ENCODE measurements at regions of chr5 and their contacts with region 1.

Region 1: DNA sequence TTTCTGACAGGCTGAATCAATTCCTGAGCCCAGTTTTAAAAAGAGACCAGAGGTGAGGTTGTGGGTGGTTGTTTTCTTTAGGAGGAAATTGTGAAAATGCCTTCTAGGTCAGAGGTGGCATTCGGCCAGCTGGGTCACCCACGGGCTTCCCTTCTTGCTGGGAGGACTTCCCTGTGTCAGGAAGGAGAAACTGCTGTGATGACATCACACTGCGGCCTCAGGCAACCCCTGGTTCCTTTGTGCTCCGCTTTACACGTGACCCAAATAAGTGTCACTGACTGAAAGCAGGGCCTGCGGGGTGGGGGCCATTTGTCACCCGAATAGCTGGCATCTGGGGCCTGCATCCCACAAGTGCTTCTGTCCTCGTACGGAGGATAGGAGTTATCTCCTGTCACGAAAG is 39.7 kb downstream of the FABP6 start:
- H3K4me3 Mint-ChIP-seq: no peak overlapping the region
- H3K27ac Mint-ChIP-seq: no peak overlapping the region
- H3K4me1 Mint-ChIP-seq: peaks cover 21% of the 10 kb centered on the region
- H3K27me3 Mint-ChIP-seq: peaks cover 41% of the 10 kb centered on the region

Region 2: GRCh38 chr5:160333721-160334120 is 64.7 kb after region 1 on chr5:
- intact Hi-C with region 1: loop called (anchors 5 kb)
- H3K4me3 Mint-ChIP-seq: peak overlapping the region; percentile 28
- H3K27ac Mint-ChIP-seq: no peak overlapping the region
- H3K4me1 Mint-ChIP-seq: peaks cover 34% of the 10 kb centered on the region
- H3K27me3 Mint-ChIP-seq: peaks cover 19% of the 10 kb centered on the region

Measured in dendritic cell treated with granulocyte-macrophage colony-stimulating factor and Interleukin-4, amounts not matched to agents 40 ng/mL and 50 ng/mL, for 4 days (primary cell).